HepG2 (cell line): ENCODE measurements at regions of chr18 and their contacts with region 1.

Region 1: DNA sequence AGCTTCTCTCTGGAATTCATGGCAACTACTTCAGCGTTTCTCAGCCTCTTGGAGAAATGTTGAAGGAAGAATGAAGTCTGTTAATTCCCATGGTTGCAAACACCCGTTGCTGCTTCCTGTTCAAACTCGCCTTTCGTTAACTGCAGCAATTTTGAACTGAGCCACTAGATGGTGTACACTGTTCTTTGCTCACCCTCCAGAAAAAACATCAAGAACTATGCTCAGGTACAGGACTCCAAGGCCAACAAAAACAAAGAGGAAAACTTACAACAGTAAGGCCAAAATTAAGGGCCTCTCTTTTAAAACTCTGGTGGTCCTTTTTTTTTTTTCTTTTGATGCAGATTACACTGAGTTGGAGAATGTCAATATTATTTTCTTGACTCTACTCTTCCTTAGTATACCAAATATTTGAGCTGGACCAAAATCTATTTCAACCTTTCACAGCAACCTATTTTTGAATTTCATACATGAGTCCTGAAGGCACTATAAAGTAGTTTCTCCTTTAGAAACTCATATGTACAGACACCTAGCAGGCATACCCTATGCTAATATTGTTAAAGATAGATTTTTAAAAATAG is 58.2 kb downstream of the KLHL14 start:
- DNase-seq: peak; percentile 79
- ATAC-seq: peak; percentile 98
- H3K4me3 ChIP-seq: no peak overlapping the region
- H3K27ac ChIP-seq: peak overlapping the region; percentile 17
- H3K4me1 ChIP-seq: peaks cover 14% of the 10 kb centered on the region
- H3K27me3 ChIP-seq: no peaks in the 10 kb centered on the region
- CTCF ChIP-seq: peak; percentile 88
- EP300 ChIP-seq: no peak
- POLR2A ChIP-seq: no peak
- RAD21 ChIP-seq: peak; percentile 74

Region 2: DNA sequence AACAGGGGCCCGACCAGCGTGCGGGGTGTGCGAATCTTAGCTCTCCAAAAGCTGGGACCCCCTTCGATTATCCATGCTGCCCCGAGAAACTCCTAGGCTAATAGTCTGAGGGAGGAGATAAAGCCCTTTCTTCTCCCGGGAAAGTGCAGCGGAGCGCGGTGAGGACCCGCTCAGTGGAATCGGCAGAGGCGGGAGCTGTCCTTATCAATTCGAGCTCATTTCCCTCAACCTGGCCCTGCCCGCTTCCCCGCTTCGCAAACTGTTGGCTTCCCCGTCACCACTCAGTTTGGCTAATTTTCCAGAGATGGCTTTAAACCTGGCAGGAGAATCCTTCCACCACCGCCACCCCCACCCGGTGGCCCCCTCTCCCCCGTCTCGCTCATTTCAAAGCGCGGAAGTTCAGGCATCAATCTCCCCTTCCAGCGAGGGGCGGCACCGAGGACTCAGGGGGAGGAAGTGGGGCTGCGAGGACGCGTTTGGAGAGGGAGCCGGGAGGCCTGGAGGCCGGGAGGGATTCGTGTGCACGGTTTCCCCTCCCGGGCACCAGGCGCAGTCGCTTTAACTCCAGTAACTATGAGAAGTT is 56.6 kb after region 1 on chr18:
- CTCF ChIA-PET with region 1: no interaction called
- POLR2A ChIA-PET with region 1: interaction called, 5 read pairs
- in situ Hi-C with region 1: no loop called
- intact Hi-C with region 1: loop called (anchors 1 kb)
- DNase-seq: peak; percentile 25
- ATAC-seq: peak; percentile 27
- H3K4me3 ChIP-seq: peak overlapping the region; percentile 88 to 93 (median 93)
- H3K27ac ChIP-seq: peak overlapping the region; percentile 93
- H3K4me1 ChIP-seq: peaks cover 26% of the 10 kb centered on the region
- H3K27me3 ChIP-seq: no peaks in the 10 kb centered on the region; a peak in 1 of 5 replicates
- CTCF ChIP-seq: no peak
- EP300 ChIP-seq: no peak
- POLR2A ChIP-seq: no peak
- RAD21 ChIP-seq: no peak

Region 3: DNA sequence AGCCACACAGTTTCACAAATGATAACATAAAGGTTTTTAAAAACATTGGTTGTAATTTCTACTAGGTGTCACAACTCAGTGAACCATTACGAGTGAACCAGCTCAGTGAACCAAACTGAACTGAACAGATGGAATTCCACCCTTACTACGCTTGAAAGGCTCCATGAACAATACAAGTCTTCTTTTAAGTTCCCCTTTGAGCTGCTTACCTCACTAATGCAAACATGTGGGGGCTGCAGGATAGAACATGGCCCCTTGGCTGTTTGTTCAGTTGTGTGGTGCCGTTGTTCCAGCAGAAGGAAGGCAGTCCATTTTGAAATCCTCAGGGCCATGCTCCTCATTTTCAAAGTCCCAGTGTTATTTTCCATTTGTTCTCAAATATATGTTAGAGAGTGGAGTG is 88.9 kb after region 1 on chr18:
- CTCF ChIA-PET with region 1: no interaction called
- POLR2A ChIA-PET with region 1: interaction called, 3 read pairs
- in situ Hi-C with region 1: no loop called
- intact Hi-C with region 1: loop called (anchors 1 kb)
- DNase-seq: peak; percentile 99
- ATAC-seq: peak; percentile 94
- H3K4me3 ChIP-seq: peak overlapping the region in 2 of 3 experiments; percentile 43 to 46; a peak in 2 of 6 replicates
- H3K27ac ChIP-seq: peak overlapping the region; percentile 99
- H3K4me1 ChIP-seq: peaks cover 86% of the 10 kb centered on the region
- H3K27me3 ChIP-seq: no peaks in the 10 kb centered on the region
- CTCF ChIP-seq: no peak
- EP300 ChIP-seq: peak; percentile 97 to 100; a peak in 3 of 4 replicates
- POLR2A ChIP-seq: peak; percentile 56 to 91
- RAD21 ChIP-seq: 0 out of 2 replicates have a peak, but pooled peaks have one; percentile 35

Region 4: GRCh38 chr18:32847691-32848090 is 133.0 kb after region 1 on chr18:
- CTCF ChIA-PET with region 1: no interaction called
- POLR2A ChIA-PET with region 1: no interaction called
- in situ Hi-C with region 1: no loop called
- intact Hi-C with region 1: loop called (anchors 2 kb)
- DNase-seq: no peak
- ATAC-seq: peak; percentile 75
- H3K4me3 ChIP-seq: no peak overlapping the region
- H3K27ac ChIP-seq: no peak overlapping the region
- H3K4me1 ChIP-seq: peaks cover 6% of the 10 kb centered on the region; the same call in 1 of the 2 replicates
- H3K27me3 ChIP-seq: no peaks in the 10 kb centered on the region
- CTCF ChIP-seq: no peak
- EP300 ChIP-seq: no peak
- POLR2A ChIP-seq: no peak
- RAD21 ChIP-seq: no peak

Region 5: GRCh38 chr18:32893915-32894314 is 179.3 kb after region 1 on chr18:
- CTCF ChIA-PET with region 1: no interaction called
- POLR2A ChIA-PET with region 1: no interaction called
- in situ Hi-C with region 1: no loop called
- intact Hi-C with region 1: loop called (anchors 1 kb)
- DNase-seq: peak; percentile 45
- ATAC-seq: peak; percentile 92
- H3K4me3 ChIP-seq: no peak overlapping the region
- H3K27ac ChIP-seq: no peak overlapping the region
- H3K4me1 ChIP-seq: peaks cover 20% of the 10 kb centered on the region
- H3K27me3 ChIP-seq: no peaks in the 10 kb centered on the region
- CTCF ChIP-seq: peak; percentile 37
- EP300 ChIP-seq: no peak
- POLR2A ChIP-seq: no peak
- RAD21 ChIP-seq: 0 out of 2 replicates have a peak, but pooled peaks have one; percentile 31

Region 6: GRCh38 chr18:32919799-32920198 is 205.1 kb after region 1 on chr18:
- CTCF ChIA-PET with region 1: interaction called, 24 read pairs
- POLR2A ChIA-PET with region 1: no interaction called
- in situ Hi-C with region 1: loop called (anchors 5 kb)
- intact Hi-C with region 1: loop called (anchors 1 kb)
- DNase-seq: peak; percentile 85
- ATAC-seq: peak; percentile 100
- H3K4me3 ChIP-seq: no peak overlapping the region
- H3K27ac ChIP-seq: no peak overlapping the region
- H3K4me1 ChIP-seq: peaks cover 21% of the 10 kb centered on the region
- H3K27me3 ChIP-seq: no peaks in the 10 kb centered on the region
- CTCF ChIP-seq: peak; percentile 89
- EP300 ChIP-seq: no peak
- POLR2A ChIP-seq: no peak
- RAD21 ChIP-seq: peak; percentile 89

Region 7: DNA sequence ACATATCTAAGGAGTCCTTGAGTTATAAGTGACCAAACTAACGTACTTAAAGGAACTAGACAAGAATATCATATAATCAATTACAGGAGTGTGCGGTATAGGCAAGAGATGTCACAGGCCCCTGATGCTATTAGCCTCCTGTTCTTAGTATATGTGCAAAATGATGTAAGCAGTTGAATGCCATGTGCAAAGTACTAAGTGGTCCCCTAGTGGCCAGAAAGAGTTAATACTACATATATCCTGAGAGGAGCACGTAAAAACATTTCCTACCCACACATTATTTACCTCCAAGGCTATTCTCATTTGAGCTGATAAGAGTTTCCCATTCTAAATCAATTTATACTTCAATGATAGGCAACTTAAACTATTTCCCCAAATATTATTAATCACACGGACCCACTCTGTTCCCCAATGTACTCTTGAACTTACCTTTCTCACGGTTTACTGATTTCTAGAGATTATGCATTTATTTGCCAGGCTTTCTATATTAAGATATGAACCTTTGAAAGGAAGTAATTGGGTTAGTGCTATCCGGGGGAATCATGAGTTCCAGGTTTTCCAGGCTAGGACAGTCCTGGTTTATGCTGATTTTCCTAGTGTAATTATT is 216.1 kb after region 1 on chr18:
- CTCF ChIA-PET with region 1: interaction called, 14 read pairs
- POLR2A ChIA-PET with region 1: no interaction called
- in situ Hi-C with region 1: no loop called
- intact Hi-C with region 1: no loop called
- DNase-seq: peak; percentile 55
- ATAC-seq: peak; percentile 98
- H3K4me3 ChIP-seq: no peak overlapping the region
- H3K27ac ChIP-seq: no peak overlapping the region
- H3K4me1 ChIP-seq: no peaks in the 10 kb centered on the region
- H3K27me3 ChIP-seq: no peaks in the 10 kb centered on the region
- CTCF ChIP-seq: peak; percentile 73
- EP300 ChIP-seq: no peak
- POLR2A ChIP-seq: no peak
- RAD21 ChIP-seq: no peak